ENCODE measurements at regions of chr5 and their contacts with region 1.

Region 1: GRCh38 chr5:180291943-180292831 is at the start of gene MAPK9:
- DNase-seq: peak; percentile 76 to 96 (median 83)
- ATAC-seq: peak; percentile 69
- H3K4me3 ChIP-seq: peak within 1 kb of the TSS; percentile 62 to 87
- H3K4me3 Mint-ChIP-seq: peak within 1 kb of the TSS; percentile 95
- H3K27ac ChIP-seq: peak within 1 kb of the TSS; percentile 88 to 93
- H3K27ac Mint-ChIP-seq: peak within 1 kb of the TSS; percentile 99
- H3K4me1 ChIP-seq: peaks cover 23% of the 10 kb centered on the region
- H3K4me1 Mint-ChIP-seq: peaks cover 56% of the 10 kb centered on the region
- H3K27me3 ChIP-seq: no peaks in the 10 kb centered on the region
- H3K27me3 Mint-ChIP-seq: no peaks in the 10 kb centered on the region
- CTCF ChIP-seq: no peak
- total RNA-seq, gene MAPK9: 23.3 to 24.9 TPM

Region 2: GRCh38 chr5:179559284-179560252 is 732.6 kb before region 1 on chr5:
- CTCF ChIA-PET with region 1: no interaction called
- POLR2A ChIA-PET with region 1: no interaction called
- intact Hi-C with region 1: loop called in 1 of 2 experiments (anchors 10 kb)
- DNase-seq: peak; percentile 77 to 95 (median 86)
- ATAC-seq: peak; percentile 100
- H3K4me3 ChIP-seq: peak overlapping the region; percentile 70 to 77
- H3K4me3 Mint-ChIP-seq: peak overlapping the region; percentile 85
- H3K27ac ChIP-seq: peak overlapping the region; percentile 66 to 68
- H3K27ac Mint-ChIP-seq: peak overlapping the region; percentile 87
- H3K4me1 ChIP-seq: no peaks in the 10 kb centered on the region
- H3K4me1 Mint-ChIP-seq: peaks cover 18% of the 10 kb centered on the region
- H3K27me3 ChIP-seq: no peaks in the 10 kb centered on the region
- H3K27me3 Mint-ChIP-seq: no peaks in the 10 kb centered on the region
- CTCF ChIP-seq: no peak

Region 3: GRCh38 chr5:180304431-180305375 is 12.5 kb after region 1 on chr5:
- CTCF ChIA-PET with region 1: interaction called, 15 read pairs
- POLR2A ChIA-PET with region 1: interaction called, 4 read pairs
- intact Hi-C with region 1: no loop called
- DNase-seq: no peak
- ATAC-seq: no peak
- H3K4me3 ChIP-seq: no peak overlapping the region
- H3K4me3 Mint-ChIP-seq: no peak overlapping the region
- H3K27ac ChIP-seq: no peak overlapping the region
- H3K27ac Mint-ChIP-seq: no peak overlapping the region
- H3K4me1 ChIP-seq: no peaks in the 10 kb centered on the region
- H3K4me1 Mint-ChIP-seq: no peaks in the 10 kb centered on the region
- H3K27me3 ChIP-seq: no peaks in the 10 kb centered on the region
- H3K27me3 Mint-ChIP-seq: peaks cover 4% of the 10 kb centered on the region
- CTCF ChIP-seq: no peak

Region 4: DNA sequence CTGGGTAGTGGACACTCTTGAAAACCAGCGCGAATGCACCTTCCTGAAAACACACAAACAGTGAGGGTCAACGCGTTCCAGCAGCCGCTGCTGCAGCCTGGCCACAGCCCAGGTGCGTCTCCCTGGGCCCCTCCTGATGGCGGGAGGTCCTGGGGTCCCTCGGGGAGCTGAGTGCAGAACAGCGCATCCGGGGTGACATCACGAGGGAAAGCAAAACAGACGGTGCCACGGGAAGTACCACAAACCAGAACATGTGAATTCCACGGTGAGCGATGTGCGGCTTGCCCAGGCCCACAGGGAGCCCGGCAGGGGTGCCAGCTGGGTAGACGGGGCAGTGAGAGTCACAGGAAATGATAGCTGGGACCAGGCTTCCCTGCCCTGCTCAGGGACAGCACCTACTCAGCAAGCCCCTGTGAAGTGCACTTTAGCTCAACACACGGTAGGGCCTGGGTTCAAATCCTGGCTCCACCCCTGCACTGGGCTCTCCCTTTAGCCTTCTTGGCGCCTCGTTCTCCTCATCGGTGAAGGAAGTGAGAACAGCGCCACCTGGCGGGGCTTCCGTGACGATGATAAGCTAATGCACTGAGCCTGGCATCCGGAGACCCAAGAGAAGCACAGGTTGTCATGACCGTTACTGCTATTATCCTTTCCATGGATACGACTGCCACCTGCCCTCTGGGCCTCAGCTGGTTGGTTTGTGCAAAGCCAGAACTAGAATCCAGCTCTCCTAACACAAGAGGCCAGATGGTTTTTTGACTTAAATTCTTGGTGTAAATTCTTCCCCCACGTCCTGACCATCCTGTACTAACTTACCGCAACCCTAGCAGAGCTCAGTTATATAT is 36.3 kb after region 1 on chr5:
- CTCF ChIA-PET with region 1: interaction called, 50 read pairs
- POLR2A ChIA-PET with region 1: interaction called, 4 read pairs
- intact Hi-C with region 1: loop called (anchors 1 kb)
- DNase-seq: peak; percentile 68 to 90 (median 86)
- ATAC-seq: peak; percentile 94
- H3K4me3 ChIP-seq: no peak overlapping the region
- H3K4me3 Mint-ChIP-seq: no peak overlapping the region
- H3K27ac ChIP-seq: no peak overlapping the region
- H3K27ac Mint-ChIP-seq: no peak overlapping the region
- H3K4me1 ChIP-seq: no peaks in the 10 kb centered on the region
- H3K4me1 Mint-ChIP-seq: no peaks in the 10 kb centered on the region
- H3K27me3 ChIP-seq: no peaks in the 10 kb centered on the region
- H3K27me3 Mint-ChIP-seq: peaks cover 14% of the 10 kb centered on the region
- CTCF ChIP-seq: peak; percentile 89

Region 5: DNA sequence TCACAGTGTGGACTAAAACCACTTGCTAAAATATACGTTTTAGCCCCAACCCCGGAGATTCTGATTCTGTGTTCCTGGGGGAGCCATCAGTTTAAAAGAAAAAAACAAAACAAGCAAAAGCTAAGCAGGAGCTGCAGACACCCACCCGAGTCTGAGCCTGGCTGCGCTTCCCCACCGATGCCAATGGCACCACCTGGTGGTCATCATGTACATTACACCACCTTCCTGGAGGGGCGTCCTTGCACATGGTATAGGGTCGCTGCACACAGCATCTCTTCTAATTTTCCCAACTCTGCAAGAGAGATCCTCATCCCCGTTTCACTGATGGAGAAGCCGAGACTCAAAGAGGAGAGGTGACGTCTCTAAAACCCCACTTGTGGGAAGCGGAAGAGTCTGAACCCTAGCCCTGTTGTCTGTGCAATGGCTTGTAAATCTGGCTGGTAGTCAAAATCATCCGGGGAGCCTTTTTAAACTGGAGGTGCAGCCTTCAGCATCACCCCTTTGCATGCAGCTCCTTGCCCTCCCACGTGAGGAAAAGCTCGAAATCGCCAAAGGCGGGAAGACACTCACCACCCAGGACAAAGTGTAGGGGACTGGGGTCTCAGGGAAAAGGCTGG is 178.9 kb after region 1 on chr5:
- CTCF ChIA-PET with region 1: interaction called, 26 read pairs
- POLR2A ChIA-PET with region 1: no interaction called
- intact Hi-C with region 1: loop called (anchors 1 kb)
- DNase-seq: peak; percentile 16 to 80 (median 61)
- ATAC-seq: peak; percentile 94
- H3K4me3 ChIP-seq: no peak overlapping the region
- H3K4me3 Mint-ChIP-seq: no peak overlapping the region
- H3K27ac ChIP-seq: no peak overlapping the region
- H3K27ac Mint-ChIP-seq: no peak overlapping the region
- H3K4me1 ChIP-seq: no peaks in the 10 kb centered on the region
- H3K4me1 Mint-ChIP-seq: no peaks in the 10 kb centered on the region
- H3K27me3 ChIP-seq: no peaks in the 10 kb centered on the region
- H3K27me3 Mint-ChIP-seq: peaks cover 2% of the 10 kb centered on the region
- CTCF ChIP-seq: peak; percentile 86

Region 6: DNA sequence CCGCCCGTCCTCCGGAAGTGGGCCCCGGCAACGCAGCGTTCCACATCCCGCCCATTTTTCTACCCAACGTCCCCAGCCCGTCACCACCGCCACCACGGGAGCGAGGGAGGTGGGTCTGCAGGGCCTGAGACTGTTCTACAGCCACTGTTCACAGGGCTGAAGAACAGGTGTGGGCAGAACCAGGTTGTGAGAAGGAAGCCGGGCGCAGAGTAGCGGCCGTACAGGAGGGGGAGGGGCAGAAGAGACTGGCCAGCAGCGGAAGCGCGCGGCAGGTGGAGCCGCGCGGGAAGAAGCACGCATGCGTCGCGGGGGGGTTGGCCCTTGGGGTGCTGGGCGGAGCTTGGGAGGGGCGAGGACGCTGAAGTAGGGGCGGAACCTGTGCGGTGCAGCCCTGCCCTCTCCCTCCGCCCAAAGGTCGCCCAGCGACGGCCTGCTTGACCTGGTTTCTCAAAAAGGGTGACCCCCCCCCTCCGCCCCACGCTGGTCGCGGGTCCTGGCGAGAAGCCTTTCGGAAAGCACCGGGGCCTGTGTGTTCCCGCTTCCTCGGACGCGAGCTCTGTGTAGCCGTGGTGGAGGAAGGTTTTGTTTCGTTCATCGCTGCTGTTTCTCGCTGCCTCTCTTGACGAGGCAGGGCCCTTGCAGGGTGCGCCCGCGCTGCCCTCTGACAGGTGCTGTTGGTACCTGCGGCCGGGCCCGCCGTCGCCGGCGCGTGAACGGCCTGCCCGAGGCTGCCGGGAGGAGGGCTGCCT is 518.2 kb after region 1 on chr5:
- CTCF ChIA-PET with region 1: no interaction called
- POLR2A ChIA-PET with region 1: no interaction called
- intact Hi-C with region 1: loop called in 1 of 2 experiments (anchors 5 kb)
- DNase-seq: peak; percentile 91 to 99 (median 97)
- ATAC-seq: peak; percentile 79
- H3K4me3 ChIP-seq: peak overlapping the region; percentile 66 to 96
- H3K4me3 Mint-ChIP-seq: peak overlapping the region; percentile 84
- H3K27ac ChIP-seq: peak overlapping the region; percentile 94 to 98
- H3K27ac Mint-ChIP-seq: peak overlapping the region; percentile 100
- H3K4me1 ChIP-seq: peaks cover 50% of the 10 kb centered on the region
- H3K4me1 Mint-ChIP-seq: peaks cover 72% of the 10 kb centered on the region
- H3K27me3 ChIP-seq: no peaks in the 10 kb centered on the region
- H3K27me3 Mint-ChIP-seq: no peaks in the 10 kb centered on the region
- CTCF ChIP-seq: no peak

Region 7: DNA sequence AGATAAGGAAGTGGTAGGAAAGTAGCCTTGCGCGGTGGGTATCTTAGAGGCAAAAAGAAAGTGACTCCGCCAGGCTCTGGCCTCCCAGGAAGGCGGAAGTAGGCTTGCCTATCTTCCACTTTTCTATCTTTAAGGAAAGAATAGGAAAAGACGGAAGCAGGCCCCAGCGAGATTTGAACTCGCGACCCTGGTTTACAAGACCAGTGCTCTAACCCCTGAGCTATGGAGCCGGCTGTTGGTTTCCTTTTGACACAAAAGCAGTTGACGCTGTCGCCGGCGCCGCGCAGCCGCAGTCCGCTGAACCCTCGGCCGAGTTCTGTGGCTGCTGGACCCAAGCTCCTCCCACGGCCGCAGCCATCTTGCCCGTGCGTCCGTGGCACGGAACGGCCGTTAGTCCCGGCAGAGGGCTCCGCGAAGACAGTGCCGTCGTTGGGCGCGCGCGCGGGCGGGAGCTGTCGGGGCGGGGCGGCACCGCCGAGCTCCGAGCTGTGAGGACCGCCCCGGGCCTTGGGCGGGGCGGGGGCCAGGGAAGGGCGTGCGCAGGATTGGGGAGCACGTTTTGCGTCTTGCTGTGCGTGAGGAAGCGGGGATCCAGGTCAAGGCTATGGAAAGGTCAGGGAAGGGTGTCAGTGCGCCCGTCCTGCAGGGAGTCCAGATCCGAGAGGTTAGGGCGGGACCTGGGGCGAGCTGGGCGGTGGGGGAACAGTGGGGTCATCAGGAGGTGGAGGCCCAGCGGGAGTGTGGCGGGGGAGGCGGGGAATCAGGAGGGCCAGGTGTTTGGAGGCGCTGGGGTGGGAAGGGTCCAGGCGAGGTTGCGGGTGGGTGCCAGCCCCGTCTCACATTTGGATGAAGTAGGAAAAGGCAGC is 899.6 kb after region 1 on chr5:
- CTCF ChIA-PET with region 1: no interaction called
- POLR2A ChIA-PET with region 1: no interaction called
- intact Hi-C with region 1: no loop called
- DNase-seq: peak; percentile 90 to 99 (median 96)
- ATAC-seq: peak; percentile 50
- H3K4me3 ChIP-seq: peak overlapping the region; percentile 88 to 90
- H3K4me3 Mint-ChIP-seq: peak overlapping the region; percentile 98
- H3K27ac ChIP-seq: peak overlapping the region; percentile 74 to 78
- H3K27ac Mint-ChIP-seq: peak overlapping the region; percentile 95
- H3K4me1 ChIP-seq: peaks cover 7% of the 10 kb centered on the region
- H3K4me1 Mint-ChIP-seq: peaks cover 23% of the 10 kb centered on the region
- H3K27me3 ChIP-seq: no peaks in the 10 kb centered on the region
- H3K27me3 Mint-ChIP-seq: no peaks in the 10 kb centered on the region
- CTCF ChIP-seq: no peak

Measured in CD8-positive, alpha-beta T cell (primary cell).